ENCODE measurements at regions of chr7 and their contacts with region 1.

Region 1: DNA sequence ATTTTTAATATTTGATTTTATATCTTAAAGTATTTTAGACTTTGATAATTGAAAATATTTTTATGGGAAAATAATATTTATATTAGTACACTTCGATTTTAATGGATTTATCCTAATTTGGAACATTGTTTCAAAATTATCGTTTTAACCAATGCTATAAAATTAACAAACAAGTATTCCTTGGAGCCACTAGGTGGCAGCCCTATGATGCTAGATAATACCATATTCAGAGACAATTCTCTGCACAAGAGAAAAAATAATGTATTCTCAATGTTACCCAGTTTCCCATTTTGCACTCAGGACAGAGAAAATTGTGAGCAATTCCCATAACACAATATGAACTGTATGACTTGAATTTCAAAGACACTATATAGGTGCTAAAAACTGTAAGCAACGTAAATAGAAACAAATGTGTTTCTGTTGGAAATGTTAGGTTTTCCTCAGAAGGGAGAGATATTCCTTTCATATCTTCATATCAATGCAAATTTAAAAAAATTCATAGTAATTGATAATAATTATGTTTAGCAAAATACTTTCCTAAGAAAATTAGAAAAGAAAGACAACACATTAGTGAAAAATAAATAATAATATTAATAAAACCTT is 237.8 kb downstream of the SEMA3E start:
- DNase-seq: peak; percentile 28
- ATAC-seq: no peak
- H3K4me3 ChIP-seq: no peak overlapping the region
- H3K27ac ChIP-seq: no peak overlapping the region
- H3K4me1 ChIP-seq: no peaks in the 10 kb centered on the region
- H3K27me3 ChIP-seq: no peaks in the 10 kb centered on the region
- CTCF ChIP-seq: peak; percentile 51
- EP300 ChIP-seq: no peak
- POLR2A ChIP-seq: no peak
- RAD21 ChIP-seq: no peak

Region 2: DNA sequence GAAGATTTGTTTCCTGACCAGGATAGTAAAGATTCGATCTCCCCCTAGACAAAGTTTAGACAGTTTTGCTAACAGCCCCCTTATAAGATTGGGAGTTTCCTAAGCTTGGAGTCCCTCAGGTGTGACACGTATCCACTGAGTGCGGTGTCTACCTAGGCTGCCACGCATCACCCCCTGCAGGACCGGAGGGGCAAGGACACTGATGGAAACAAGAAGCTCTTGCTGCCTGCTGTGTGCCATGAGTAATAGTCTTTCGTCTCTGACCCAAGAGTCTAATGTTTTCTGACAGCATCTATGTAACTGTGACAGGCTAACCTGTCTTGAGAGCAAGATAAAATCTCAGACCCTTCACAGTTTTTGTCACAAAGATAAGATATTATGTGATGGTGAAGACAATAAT is 64.3 kb after region 1 on chr7:
- CTCF ChIA-PET with region 1: no interaction called
- POLR2A ChIA-PET with region 1: no interaction called
- in situ Hi-C with region 1: no loop called
- intact Hi-C with region 1: loop called (anchors 2 kb)
- DNase-seq: peak; percentile 1
- ATAC-seq: peak; percentile 90
- H3K4me3 ChIP-seq: no peak overlapping the region
- H3K27ac ChIP-seq: no peak overlapping the region
- H3K4me1 ChIP-seq: no peaks in the 10 kb centered on the region
- H3K27me3 ChIP-seq: no peaks in the 10 kb centered on the region
- CTCF ChIP-seq: peak; percentile 27
- EP300 ChIP-seq: no peak
- POLR2A ChIP-seq: no peak
- RAD21 ChIP-seq: no peak

Region 3: DNA sequence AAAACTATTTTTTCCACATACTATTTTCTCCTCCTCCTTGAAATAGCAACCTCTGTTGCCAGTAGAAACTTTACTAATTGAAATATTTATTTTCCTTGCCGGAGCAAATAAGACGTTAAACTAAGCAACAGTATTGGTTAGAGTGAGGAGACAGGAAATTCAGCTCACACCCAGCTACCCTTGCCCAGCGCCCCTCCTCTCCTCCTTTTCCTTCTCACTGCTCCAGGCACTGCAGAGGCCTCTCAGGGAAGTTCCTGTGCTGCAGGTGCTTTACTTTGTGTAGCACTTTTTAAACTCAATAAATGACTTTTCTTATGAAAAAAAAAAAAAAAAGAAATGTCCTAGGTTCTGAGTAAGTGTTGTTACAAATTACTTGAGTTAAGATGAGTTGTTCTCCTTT is 103.9 kb after region 1 on chr7:
- CTCF ChIA-PET with region 1: interaction called, 5 read pairs
- POLR2A ChIA-PET with region 1: no interaction called
- in situ Hi-C with region 1: no loop called
- intact Hi-C with region 1: loop called (anchors 1 kb)
- DNase-seq: no peak
- ATAC-seq: no peak
- H3K4me3 ChIP-seq: no peak overlapping the region
- H3K27ac ChIP-seq: no peak overlapping the region
- H3K4me1 ChIP-seq: no peaks in the 10 kb centered on the region
- H3K27me3 ChIP-seq: no peaks in the 10 kb centered on the region; a peak in 1 of 5 replicates
- CTCF ChIP-seq: no peak
- EP300 ChIP-seq: no peak
- POLR2A ChIP-seq: no peak
- RAD21 ChIP-seq: no peak

Region 4: GRCh38 chr7:83593921-83594475 is 182.9 kb after region 1 on chr7:
- CTCF ChIA-PET with region 1: no interaction called
- POLR2A ChIA-PET with region 1: no interaction called
- in situ Hi-C with region 1: no loop called
- intact Hi-C with region 1: no loop called
- DNase-seq: no peak
- ATAC-seq: no peak
- H3K4me3 ChIP-seq: no peak overlapping the region
- H3K27ac ChIP-seq: no peak overlapping the region
- H3K4me1 ChIP-seq: no peaks in the 10 kb centered on the region
- H3K27me3 ChIP-seq: no peaks in the 10 kb centered on the region
- CTCF ChIP-seq: no peak
- EP300 ChIP-seq: no peak
- POLR2A ChIP-seq: no peak
- RAD21 ChIP-seq: no peak

Region 5: DNA sequence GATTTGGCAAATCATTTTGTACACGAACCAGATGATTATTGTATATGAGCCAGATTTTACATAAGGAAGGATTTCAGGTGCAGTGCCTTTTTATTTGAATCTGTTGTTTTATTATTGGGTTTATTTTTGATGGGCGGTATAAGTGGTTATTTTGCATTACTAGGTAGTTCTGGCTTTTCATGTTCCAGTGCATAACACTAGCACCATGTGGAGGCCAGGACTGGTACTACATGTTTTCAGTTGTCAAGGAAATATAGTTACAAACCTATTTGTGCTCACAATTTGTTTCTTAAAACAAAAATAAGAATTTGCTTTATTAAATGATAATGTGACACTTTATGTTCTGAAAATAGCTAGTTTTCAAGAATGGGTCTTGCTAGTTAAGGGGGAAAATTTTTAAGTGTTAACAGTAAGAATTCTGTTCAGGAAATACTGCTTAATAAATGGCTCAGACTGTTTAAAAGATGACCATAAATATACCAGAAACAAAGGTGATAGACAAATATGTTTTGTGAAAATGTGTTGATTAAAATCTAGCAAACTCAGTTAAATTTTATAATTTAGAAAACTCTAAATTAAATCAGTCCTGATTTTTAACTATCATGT is 245.0 kb after region 1 on chr7:
- CTCF ChIA-PET with region 1: interaction called, 24 read pairs
- POLR2A ChIA-PET with region 1: no interaction called
- in situ Hi-C with region 1: loop called (anchors 10 kb)
- intact Hi-C with region 1: loop called (anchors 1 kb)
- DNase-seq: peak; percentile 26
- ATAC-seq: peak; percentile 81
- H3K4me3 ChIP-seq: no peak overlapping the region
- H3K27ac ChIP-seq: no peak overlapping the region
- H3K4me1 ChIP-seq: no peaks in the 10 kb centered on the region
- H3K27me3 ChIP-seq: no peaks in the 10 kb centered on the region
- CTCF ChIP-seq: peak; percentile 68
- EP300 ChIP-seq: no peak
- POLR2A ChIP-seq: no peak
- RAD21 ChIP-seq: no peak

Measured in HepG2 (cell line).